AG04449 (cell line): ENCODE measurements at regions of chrX and their contacts with region 1.

Region 1: GRCh38 chrX:119791438-119792231 is at the start of gene RPL39:
- DNase-seq: no peak
- H3K4me3 ChIP-seq: peak within 1 kb of the TSS; percentile 72
- CTCF ChIP-seq: no peak

Region 2: GRCh38 chrX:119502727-119503483 is 288.7 kb before region 1 on chrX:
- CTCF ChIA-PET with region 1: no interaction called
- POLR2A ChIA-PET with region 1: interaction called, 10 read pairs
- DNase-seq: no peak
- H3K4me3 ChIP-seq: no peak overlapping the region
- CTCF ChIP-seq: no peak

Region 3: GRCh38 chrX:119757979-119758730 is 33.5 kb before region 1 on chrX and contains the start of gene SOWAHD:
- CTCF ChIA-PET with region 1: no interaction called
- POLR2A ChIA-PET with region 1: interaction called, 10 read pairs
- DNase-seq: no peak
- H3K4me3 ChIP-seq: peak within 1 kb of the TSS; percentile 54
- CTCF ChIP-seq: no peak

Region 4: GRCh38 chrX:119852382-119853353 is 61.0 kb after region 1 on chrX and contains the start of gene UPF3B:
- CTCF ChIA-PET with region 1: no interaction called
- POLR2A ChIA-PET with region 1: interaction called, 10 read pairs
- DNase-seq: peak; percentile 92
- H3K4me3 ChIP-seq: peak within 1 kb of the TSS; percentile 67
- CTCF ChIP-seq: no peak